Gastrocnemius medialis (tissue), 4 donors: ENCODE measurements at regions of chr9 and their contacts with region 1.

Region 1: DNA sequence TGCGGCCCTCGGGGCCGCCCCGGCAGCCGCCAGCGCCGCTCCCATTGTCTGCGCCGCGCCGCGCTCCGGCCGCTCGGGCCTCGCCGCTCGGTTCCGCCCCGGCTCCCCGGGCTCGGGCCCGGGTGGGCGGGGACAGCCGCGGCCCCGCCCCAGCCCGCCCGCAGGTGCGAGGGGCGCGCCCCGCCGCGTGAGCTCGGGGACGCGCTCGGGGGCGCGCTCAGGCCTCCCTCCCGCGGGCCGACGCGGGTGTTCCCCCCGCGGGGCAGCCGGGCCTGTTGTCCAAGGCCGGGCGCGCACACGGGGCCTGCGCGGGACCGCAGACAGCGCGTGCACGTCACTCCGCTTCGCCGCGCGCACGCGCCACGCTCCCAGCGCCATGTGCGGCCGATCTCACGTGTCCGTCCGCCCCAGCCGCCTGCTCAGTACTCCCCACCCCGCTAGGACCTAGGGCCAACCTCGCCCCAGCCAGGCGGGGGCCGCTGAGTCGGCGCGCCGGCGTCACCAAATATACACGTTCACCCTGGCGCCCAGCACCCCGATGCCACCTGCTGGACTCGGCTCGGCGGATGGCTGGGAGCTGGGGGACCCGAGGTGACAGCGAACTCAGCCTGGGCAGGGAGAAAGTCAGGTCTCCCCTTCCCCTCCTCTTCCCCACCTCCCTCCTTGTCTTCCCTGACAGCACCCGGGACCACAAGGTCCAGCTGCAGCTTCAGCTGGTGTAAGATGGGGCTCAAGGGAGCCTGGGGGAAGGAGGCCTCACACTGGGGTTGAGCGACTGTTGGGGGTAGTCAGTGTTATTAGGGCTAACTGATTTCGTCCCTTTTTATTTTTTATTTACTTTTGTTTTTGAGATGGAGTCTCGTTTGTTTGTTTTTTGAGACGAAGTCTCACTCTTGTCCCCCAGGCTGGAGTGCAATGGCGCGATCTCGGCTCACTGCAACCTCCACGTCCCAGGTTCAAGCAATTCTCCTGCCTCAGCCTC is 14.3 kb downstream of the GBGT1 start:
- DNase-seq: peak; percentile 87 to 91
- ATAC-seq: peak; percentile 70 to 77
- H3K4me3 ChIP-seq: peak overlapping the region; percentile 23 to 67 (median 48)
- H3K27ac ChIP-seq: peak overlapping the region; percentile 86 to 94 (median 88)
- H3K4me1 ChIP-seq: peaks cover 18 to 25% of the 10 kb centered on the region in 2 donors
- H3K27me3 ChIP-seq: no peaks in the 10 kb centered on the region
- CTCF ChIP-seq: peak; percentile 32 to 54 (median 47)
- POLR2A ChIP-seq: peak; percentile 66 to 76

Region 2: DNA sequence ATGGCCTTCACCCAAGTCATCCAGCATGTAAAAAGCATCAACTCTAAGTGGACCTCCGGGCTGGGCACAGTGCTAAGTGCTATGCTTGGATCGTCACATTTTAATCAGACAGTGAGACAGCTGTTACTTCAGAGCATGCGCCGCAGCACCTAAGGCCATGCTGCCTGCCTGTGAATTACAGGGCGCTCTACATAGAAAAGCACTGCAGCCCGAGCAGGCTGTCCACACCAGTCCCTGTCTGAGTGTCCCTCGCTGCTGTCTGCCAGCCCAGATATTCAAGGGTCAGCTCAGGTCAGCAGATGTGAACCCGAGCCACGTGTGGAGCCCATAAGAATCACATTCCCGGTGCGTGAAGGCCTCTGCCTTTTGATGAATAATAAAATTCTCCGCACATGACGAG is 308.4 kb before region 1 on chr9:
- in situ Hi-C with region 1: no loop called
- intact Hi-C with region 1: no loop called
- DNase-seq: no peak
- ATAC-seq: no peak
- H3K4me3 ChIP-seq: no peak overlapping the region
- H3K27ac ChIP-seq: no peak overlapping the region
- H3K4me1 ChIP-seq: no peaks in the 10 kb centered on the region
- H3K27me3 ChIP-seq: peaks cover 0 to 5% (median 0%) of the 10 kb centered on the region in 3 donors
- CTCF ChIP-seq: no peak
- POLR2A ChIP-seq: no peak

Region 3: DNA sequence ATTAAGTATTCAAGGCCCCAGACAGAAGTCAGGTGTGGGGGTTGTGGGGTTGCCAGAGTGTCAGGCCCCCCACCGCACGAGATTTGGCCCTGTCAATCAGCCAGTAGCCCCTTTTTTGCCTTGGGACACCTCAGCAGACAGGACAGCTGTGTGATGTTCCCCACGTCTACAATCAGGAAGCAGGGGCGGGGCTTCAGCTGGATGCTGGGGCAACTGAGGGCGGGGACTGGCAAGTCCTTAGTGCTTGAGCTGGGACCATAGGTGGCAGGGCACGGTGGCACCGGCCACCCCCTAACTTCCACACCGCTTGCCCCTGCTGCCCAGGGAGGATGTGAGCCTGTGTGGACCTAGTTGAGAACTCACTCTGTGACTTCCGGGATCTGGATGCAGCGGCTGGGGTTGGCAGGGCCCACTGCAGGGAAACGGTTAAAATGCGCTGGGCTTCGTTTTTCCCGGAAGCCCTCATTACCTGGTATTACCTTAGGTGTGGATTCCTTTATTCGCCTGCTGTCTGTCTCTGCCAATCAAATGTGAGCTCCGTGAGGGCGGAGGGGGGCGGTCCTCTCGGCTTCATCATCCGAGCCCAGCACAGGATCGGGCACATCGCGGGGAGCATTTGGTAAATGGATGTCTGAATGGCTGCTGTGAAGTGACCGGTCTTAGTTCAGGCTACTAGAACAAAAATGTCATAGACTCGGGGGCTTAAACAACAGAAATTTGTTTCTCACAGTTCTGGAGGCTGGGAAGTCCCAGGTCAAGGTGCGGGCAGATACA is 126.1 kb before region 1 on chr9:
- in situ Hi-C with region 1: loop called in 2 of 4 experiments (anchors 10 kb)
- intact Hi-C with region 1: loop called (anchors 2 kb)
- DNase-seq: no peak
- ATAC-seq: no peak
- H3K4me3 ChIP-seq: no peak overlapping the region
- H3K27ac ChIP-seq: no peak overlapping the region
- H3K4me1 ChIP-seq: no peaks in the 10 kb centered on the region
- H3K27me3 ChIP-seq: peaks cover 0 to 6% (median 0%) of the 10 kb centered on the region in 3 donors
- CTCF ChIP-seq: no peak
- POLR2A ChIP-seq: no peak

Region 4: GRCh38 chr9:133030317-133031129 is 118.9 kb before region 1 on chr9 and contains the start of gene GTF3C5:
- in situ Hi-C with region 1: loop called in 3 of 4 experiments (anchors 5 to 10 kb)
- intact Hi-C with region 1: loop called (anchors 2 kb)
- DNase-seq: peak; percentile 92 to 94
- ATAC-seq: peak; percentile 99
- H3K4me3 ChIP-seq: peak within 1 kb of the TSS; percentile 85 to 97 (median 93)
- H3K27ac ChIP-seq: peak within 1 kb of the TSS; percentile 93 to 94 (median 94)
- H3K4me1 ChIP-seq: peaks cover 32 to 43% of the 10 kb centered on the region in 2 donors
- H3K27me3 ChIP-seq: no peaks in the 10 kb centered on the region
- CTCF ChIP-seq: peak in 2 of 5 experiments; percentile 16 to 30
- POLR2A ChIP-seq: peak; percentile 65 to 76
- total RNA-seq, gene GTF3C5: 48.1 to 55.3 (median 51.5) TPM

Region 5: GRCh38 chr9:133035669-133036068 is 113.7 kb before region 1 on chr9:
- in situ Hi-C with region 1: loop called in 1 of 4 experiments (anchors 5 kb)
- intact Hi-C with region 1: loop called (anchors 2 kb)
- DNase-seq: no peak
- ATAC-seq: peak in 1 of 2 donors; percentile 37
- H3K4me3 ChIP-seq: no peak overlapping the region
- H3K27ac ChIP-seq: peak overlapping the region; percentile 6 to 46 (median 29)
- H3K4me1 ChIP-seq: peaks cover 33 to 51% of the 10 kb centered on the region in 2 donors
- H3K27me3 ChIP-seq: no peaks in the 10 kb centered on the region
- CTCF ChIP-seq: no peak
- POLR2A ChIP-seq: no peak

Region 6: DNA sequence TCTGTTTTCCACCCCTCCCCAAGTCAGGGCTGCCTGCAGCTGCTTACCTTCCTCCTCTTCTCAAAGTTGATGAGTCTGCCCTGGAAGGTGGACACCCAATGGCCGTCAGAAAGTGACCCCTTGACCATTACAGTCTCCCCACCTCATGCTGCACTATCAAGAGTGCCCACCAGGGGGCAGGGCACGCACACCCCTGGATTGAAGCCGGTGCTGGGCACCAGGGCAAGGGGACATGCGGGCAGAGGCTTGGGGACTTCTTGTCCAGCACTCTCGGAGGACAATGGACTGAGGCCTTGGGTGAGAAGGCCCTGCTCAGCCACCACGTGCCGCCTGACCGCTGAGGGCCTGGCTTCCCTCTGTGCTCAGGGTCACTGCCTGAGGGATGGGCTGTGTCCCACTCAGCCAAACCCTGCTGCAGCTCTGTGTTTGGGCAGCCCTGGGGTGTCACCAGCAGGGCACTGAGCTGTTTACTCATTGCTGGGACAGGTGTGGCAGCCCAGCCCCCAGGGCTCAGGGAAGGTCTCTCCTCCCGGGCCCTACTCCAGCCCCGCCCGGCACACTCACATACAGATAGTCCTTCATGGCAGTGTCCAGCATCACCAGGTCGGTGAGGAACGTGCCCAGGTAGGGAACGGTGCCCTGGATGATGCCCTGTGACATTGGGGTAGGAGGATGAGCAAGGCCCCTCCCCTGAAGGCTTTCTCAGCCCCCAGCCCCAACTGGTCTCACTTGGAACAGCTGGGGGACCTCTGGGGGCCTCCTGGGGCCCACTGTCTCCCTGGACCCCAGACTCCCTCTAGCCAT is 46.0 kb before region 1 on chr9:
- in situ Hi-C with region 1: loop called in 3 of 4 experiments (anchors 5 kb)
- intact Hi-C with region 1: loop called (anchors 1 kb)
- DNase-seq: peak; percentile 63 to 78
- ATAC-seq: peak; percentile 76 to 91
- H3K4me3 ChIP-seq: no peak overlapping the region
- H3K27ac ChIP-seq: peak overlapping the region; percentile 52 to 77 (median 68)
- H3K4me1 ChIP-seq: peaks cover 10 to 16% of the 10 kb centered on the region in 2 donors
- H3K27me3 ChIP-seq: no peaks in the 10 kb centered on the region
- CTCF ChIP-seq: peak; percentile 98 to 100 (median 99)
- POLR2A ChIP-seq: no peak

Region 7: DNA sequence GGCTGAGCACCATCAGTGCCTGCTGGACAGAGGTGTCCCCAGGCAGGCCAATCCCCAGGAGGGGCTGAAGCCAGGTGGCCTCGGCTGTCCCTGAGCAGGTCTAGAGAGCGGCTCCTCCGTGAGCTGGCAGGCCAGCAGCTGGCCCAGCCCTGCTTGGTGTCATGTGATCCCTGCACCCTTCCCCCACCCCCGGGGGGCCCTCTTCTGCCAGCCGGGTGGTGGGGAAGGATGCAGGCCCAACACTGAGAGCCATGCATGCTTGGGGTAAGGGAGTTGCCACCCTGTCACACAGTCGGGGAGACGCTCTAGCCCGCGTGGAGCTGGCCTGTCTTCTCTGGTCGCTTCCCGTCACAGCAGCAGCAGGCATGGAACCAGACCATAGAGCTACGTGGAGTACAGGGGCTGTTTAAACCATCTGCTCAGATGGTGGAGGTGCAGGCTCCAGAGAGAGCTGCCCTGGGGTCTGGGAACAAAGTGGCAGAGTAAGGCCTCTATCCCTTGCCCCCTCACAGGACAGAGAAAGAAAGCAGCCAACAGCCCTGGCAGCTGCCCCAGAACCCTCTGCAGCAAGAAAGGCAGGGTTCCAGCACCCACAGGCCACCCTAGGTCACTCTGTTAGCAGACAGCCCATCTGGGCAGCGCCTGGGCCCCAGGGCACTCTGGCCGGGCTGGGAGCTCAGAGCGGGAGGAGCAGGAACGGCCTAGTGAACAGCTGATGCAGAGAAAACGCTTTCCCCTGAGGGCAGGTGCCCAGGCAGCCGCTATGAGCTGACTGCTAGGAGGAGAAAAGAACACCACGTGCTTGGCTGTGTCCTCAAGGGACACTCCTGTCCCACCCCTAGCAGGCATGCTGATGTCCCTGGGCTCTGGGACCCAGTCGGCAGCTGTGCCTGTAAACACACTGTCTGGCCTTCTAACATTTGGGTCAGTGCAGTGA is 35.2 kb before region 1 on chr9:
- in situ Hi-C with region 1: loop called in 3 of 4 experiments (anchors 5 kb)
- intact Hi-C with region 1: loop called (anchors 1 kb)
- DNase-seq: peak; percentile 86 to 94
- ATAC-seq: peak; percentile 77 to 78
- H3K4me3 ChIP-seq: peak overlapping the region; percentile 4 to 29 (median 19)
- H3K27ac ChIP-seq: peak overlapping the region; percentile 85 to 98 (median 93)
- H3K4me1 ChIP-seq: peaks cover 72 to 74% of the 10 kb centered on the region in 2 donors
- H3K27me3 ChIP-seq: no peaks in the 10 kb centered on the region
- CTCF ChIP-seq: peak in 2 of 5 experiments; percentile 14 to 22
- POLR2A ChIP-seq: peak; percentile 52 to 69